BJ (cell line): ENCODE measurements at regions of chr2 and their contacts with region 1.

Region 1: DNA sequence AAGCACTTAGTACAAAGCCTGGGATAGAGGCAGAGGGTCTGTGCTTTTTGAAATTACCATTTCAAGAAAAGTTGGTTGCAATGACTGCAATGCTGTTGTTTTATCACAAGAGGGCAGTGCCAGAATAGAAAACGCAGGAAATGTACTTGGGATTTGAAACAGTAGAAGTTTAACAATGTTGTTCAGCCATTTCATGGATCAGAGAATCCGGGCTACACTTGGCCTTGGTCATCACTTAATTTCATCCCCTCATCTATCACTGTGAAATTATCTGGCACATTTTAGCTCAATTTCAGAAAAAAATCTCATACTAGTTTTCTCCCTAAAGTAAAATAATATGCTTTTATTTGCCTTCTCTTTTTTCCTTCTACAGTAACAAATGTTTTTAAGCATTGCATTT is 70.8 kb downstream of the RAPGEF4 start:
- DNase-seq: no peak
- H3K4me3 ChIP-seq: no peak overlapping the region
- H3K27me3 ChIP-seq: peaks cover 2% of the 10 kb centered on the region
- CTCF ChIP-seq: peak; percentile 85

Region 2: DNA sequence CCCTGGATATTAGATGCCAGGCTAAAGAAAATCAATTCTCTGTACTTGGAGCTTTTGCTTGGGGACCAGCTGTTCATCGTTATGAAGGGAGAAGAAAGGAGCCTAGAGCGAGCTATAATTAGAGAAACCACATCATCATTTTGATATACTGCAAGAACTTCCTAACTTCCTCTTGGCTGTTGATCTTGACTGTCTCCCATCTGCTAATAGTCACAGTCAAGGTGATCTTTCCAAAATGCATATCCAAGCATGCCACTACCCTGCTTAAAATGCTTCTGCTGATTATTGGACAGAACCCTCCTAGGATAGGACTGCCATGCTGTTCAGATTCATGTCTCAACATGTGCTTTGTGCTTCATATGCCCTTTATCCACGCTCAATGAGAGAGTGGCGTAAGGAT is 16.1 kb before region 1 on chr2:
- CTCF ChIA-PET with region 1: interaction called, 11 read pairs
- POLR2A ChIA-PET with region 1: no interaction called
- DNase-seq: no peak
- H3K4me3 ChIP-seq: no peak overlapping the region
- H3K27me3 ChIP-seq: peaks cover 2% of the 10 kb centered on the region; the same call in 1 of the 2 replicates
- CTCF ChIP-seq: no peak

Region 3: GRCh38 chr2:172921532-172922236 is 115.2 kb after region 1 on chr2:
- CTCF ChIA-PET with region 1: interaction called, 17 read pairs
- POLR2A ChIA-PET with region 1: no interaction called
- DNase-seq: no peak
- H3K4me3 ChIP-seq: no peak overlapping the region
- H3K27me3 ChIP-seq: no peaks in the 10 kb centered on the region
- CTCF ChIP-seq: no peak